ENCODE measurements at regions of chr15 and their contacts with region 1.

Region 1: GRCh38 chr15:84570164-84570735 is 30.6 kb upstream of the ZSCAN2 start:
- DNase-seq: peak in 4 of 10 donors; percentile 26 to 47 (median 42)
- H3K4me3 ChIP-seq: peak overlapping the region; percentile 63 to 91 (median 78)
- H3K27ac ChIP-seq: peak overlapping the region in 56 of 59 donors; percentile 26 to 92 (median 82)
- H3K27me3 ChIP-seq: no peaks in the 10 kb centered on the region
- CTCF ChIP-seq: no peak

Region 2: GRCh38 chr15:83854321-83854720 is 715.9 kb before region 1 on chr15:
- intact Hi-C with region 1: no loop called
- DNase-seq: no peak
- H3K4me3 ChIP-seq: no peak overlapping the region
- H3K27ac ChIP-seq: no peak overlapping the region
- H3K27me3 ChIP-seq: no peaks in the 10 kb centered on the region
- CTCF ChIP-seq: no peak

Region 3: GRCh38 chr15:84621358-84621979 is 51.2 kb after region 1 on chr15:
- intact Hi-C with region 1: loop called in 1 of 2 experiments (anchors 5 kb)
- DNase-seq: peak in 1 of 10 donors; percentile 17
- H3K4me3 ChIP-seq: no peak overlapping the region
- H3K27ac ChIP-seq: no peak overlapping the region
- H3K27me3 ChIP-seq: no peaks in the 10 kb centered on the region
- CTCF ChIP-seq: no peak